ENCODE measurements at regions of chr4 and their contacts with region 1.

Region 1: DNA sequence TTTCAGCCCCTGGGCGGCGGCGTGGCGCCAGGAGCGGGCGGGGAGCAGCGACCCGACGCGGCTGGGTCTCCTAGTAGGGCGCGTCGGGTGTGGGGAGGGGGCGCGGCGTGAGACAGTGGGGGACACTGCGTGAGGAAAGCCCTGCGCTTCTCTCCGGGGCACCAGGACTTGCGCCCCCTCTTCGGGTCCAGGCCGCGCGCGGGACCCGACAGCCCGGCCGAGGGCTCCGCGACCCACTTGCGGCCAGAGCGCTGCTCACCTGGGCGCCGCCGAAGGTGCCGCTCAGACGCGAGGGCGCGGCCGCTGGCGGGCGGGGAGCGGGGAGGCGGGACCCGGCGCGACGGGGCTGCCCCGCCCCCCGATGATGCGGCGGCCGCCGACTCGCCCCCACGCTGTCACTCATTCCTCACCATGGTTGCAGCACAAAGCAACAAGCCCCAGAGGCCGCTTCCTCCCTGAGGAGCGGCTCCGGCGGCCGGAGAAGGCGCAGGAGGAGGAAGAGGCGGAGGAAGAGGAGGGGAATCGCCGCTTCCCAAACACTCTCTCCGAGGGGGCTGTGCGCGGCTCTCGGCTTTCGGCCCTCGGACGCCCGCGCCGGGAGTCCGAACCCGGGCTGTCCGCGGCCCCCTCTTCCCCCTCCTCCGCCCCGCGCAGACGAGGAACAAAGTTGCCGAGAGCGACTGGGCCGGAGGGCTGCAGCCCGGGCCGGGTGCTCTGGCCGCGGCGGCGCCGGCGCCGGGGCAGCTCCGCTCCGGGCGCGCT is at the start of gene RAPGEF2:
- DNase-seq: peak; percentile 93 to 94
- H3K4me3 ChIP-seq: peak within 1 kb of the TSS; percentile 94
- H3K4me3 Mint-ChIP-seq: peak within 1 kb of the TSS; percentile 99
- H3K27ac Mint-ChIP-seq: peak within 1 kb of the TSS; percentile 97
- H3K4me1 ChIP-seq: peaks cover 27% of the 10 kb centered on the region
- H3K4me1 Mint-ChIP-seq: peaks cover 35% of the 10 kb centered on the region
- H3K27me3 ChIP-seq: no peaks in the 10 kb centered on the region
- H3K27me3 Mint-ChIP-seq: no peaks in the 10 kb centered on the region
- CTCF ChIP-seq: peak in 1 of 2 experiments; percentile 37
- total RNA-seq, gene RAPGEF2: 65.6 and 67.6 TPM in 2 replicates

Region 2: DNA sequence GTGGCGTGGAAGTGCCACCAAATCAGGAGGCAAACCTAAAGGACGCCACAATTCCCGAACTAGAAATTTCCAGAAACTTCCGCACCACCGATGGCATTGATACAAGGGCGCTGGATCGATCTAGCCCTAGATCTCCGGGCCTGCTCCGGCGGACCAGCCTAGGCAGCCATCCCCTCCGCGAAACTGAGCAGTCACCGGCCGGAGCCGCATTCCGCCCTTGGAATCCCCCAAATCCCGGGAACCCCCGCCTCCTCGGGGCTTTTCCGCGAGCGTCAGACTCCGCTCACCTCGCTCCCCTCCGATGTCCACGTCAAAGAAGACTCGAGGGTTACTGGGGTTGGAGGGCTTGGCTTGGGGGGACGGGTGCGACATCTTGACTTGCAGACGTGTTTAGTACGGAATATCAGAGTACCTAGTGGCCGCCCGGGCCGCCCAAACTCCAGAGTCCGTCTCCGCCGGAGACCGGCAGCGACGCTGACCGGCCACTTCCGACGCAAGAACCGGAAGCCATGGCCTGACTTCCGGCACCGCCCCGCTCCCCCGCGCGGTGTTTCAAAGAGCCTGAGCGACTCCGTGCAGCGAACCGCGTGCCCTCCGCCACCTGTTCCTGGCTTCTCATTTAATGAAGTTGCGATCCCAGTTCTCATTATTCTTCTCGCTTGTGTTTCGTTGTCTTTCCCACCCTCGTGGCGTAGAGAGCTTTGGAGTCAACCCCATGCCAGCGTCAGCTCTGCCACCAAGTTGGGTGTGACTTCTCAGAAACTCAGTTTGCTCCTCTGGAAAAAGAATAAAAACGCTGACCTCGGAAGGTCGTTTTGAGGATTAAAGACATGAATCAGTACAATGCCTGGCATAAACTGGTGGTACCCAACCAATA is 379.6 kb before region 1 on chr4 and contains the start of gene PPID:
- CTCF ChIA-PET with region 1: no interaction called
- POLR2A ChIA-PET with region 1: no interaction called
- intact Hi-C with region 1: loop called (anchors 2 kb)
- DNase-seq: peak; percentile 85 to 88
- H3K4me3 ChIP-seq: peak within 1 kb of the TSS; percentile 68
- H3K4me3 Mint-ChIP-seq: peak within 1 kb of the TSS; percentile 90
- H3K27ac Mint-ChIP-seq: peak within 1 kb of the TSS; percentile 95
- H3K4me1 ChIP-seq: peaks cover 6% of the 10 kb centered on the region
- H3K4me1 Mint-ChIP-seq: peaks cover 9% of the 10 kb centered on the region
- H3K27me3 ChIP-seq: no peaks in the 10 kb centered on the region
- H3K27me3 Mint-ChIP-seq: no peaks in the 10 kb centered on the region
- CTCF ChIP-seq: no peak
- total RNA-seq, gene PPID: 50.9 and 57.2 TPM in 2 replicates

Region 3: GRCh38 chr4:158870626-158871334 is 232.0 kb before region 1 on chr4:
- CTCF ChIA-PET with region 1: no interaction called
- POLR2A ChIA-PET with region 1: no interaction called
- intact Hi-C with region 1: no loop called
- DNase-seq: no peak
- H3K4me3 ChIP-seq: no peak overlapping the region
- H3K4me3 Mint-ChIP-seq: no peak overlapping the region
- H3K27ac Mint-ChIP-seq: peak overlapping the region; percentile 46
- H3K4me1 ChIP-seq: peaks cover 11% of the 10 kb centered on the region
- H3K4me1 Mint-ChIP-seq: peaks cover 10% of the 10 kb centered on the region
- H3K27me3 ChIP-seq: no peaks in the 10 kb centered on the region
- H3K27me3 Mint-ChIP-seq: no peaks in the 10 kb centered on the region
- CTCF ChIP-seq: no peak

Region 4: GRCh38 chr4:159071178-159071991 is 31.4 kb before region 1 on chr4:
- CTCF ChIA-PET with region 1: no interaction called
- POLR2A ChIA-PET with region 1: no interaction called
- intact Hi-C with region 1: loop called (anchors 2 kb)
- DNase-seq: peak; percentile 37 to 38
- H3K4me3 ChIP-seq: no peak overlapping the region
- H3K4me3 Mint-ChIP-seq: no peak overlapping the region
- H3K27ac Mint-ChIP-seq: peak overlapping the region; percentile 83
- H3K4me1 ChIP-seq: peaks cover 21% of the 10 kb centered on the region
- H3K4me1 Mint-ChIP-seq: peaks cover 12% of the 10 kb centered on the region
- H3K27me3 ChIP-seq: no peaks in the 10 kb centered on the region
- H3K27me3 Mint-ChIP-seq: no peaks in the 10 kb centered on the region
- CTCF ChIP-seq: no peak

Region 5: DNA sequence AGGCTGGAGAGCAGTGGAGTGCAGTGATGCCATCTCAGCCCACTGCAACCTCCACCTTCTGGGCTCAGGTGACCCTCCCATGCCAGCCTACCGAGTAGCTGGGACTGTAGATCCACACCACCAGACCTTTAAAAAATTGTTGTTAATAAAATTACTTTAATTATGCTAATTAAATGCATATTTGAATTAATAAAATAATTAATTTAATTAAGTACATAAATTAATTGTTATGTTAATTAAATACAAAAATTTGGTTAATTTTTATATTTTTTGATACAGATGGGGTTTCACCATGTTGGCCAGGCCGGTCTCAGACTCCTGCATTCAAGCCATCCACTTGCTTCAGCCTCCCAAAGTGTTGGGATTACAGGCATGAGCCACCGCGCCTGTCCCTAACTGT is 12.5 kb before region 1 on chr4:
- CTCF ChIA-PET with region 1: no interaction called
- POLR2A ChIA-PET with region 1: no interaction called
- intact Hi-C with region 1: no loop called
- DNase-seq: no peak
- H3K4me3 ChIP-seq: no peak overlapping the region
- H3K4me3 Mint-ChIP-seq: no peak overlapping the region
- H3K27ac Mint-ChIP-seq: no peak overlapping the region
- H3K4me1 ChIP-seq: peaks cover 4% of the 10 kb centered on the region
- H3K4me1 Mint-ChIP-seq: no peaks in the 10 kb centered on the region
- H3K27me3 ChIP-seq: no peaks in the 10 kb centered on the region
- H3K27me3 Mint-ChIP-seq: no peaks in the 10 kb centered on the region
- CTCF ChIP-seq: no peak

Region 6: GRCh38 chr4:159129814-159130550 is 27.2 kb after region 1 on chr4:
- CTCF ChIA-PET with region 1: interaction called, 5 read pairs
- POLR2A ChIA-PET with region 1: no interaction called
- intact Hi-C with region 1: loop called (anchors 1 kb)
- DNase-seq: peak; percentile 71 to 77
- H3K4me3 ChIP-seq: no peak overlapping the region
- H3K4me3 Mint-ChIP-seq: peak overlapping the region; percentile 61
- H3K27ac Mint-ChIP-seq: peak overlapping the region; percentile 79
- H3K4me1 ChIP-seq: peaks cover 66% of the 10 kb centered on the region
- H3K4me1 Mint-ChIP-seq: peaks cover 27% of the 10 kb centered on the region
- H3K27me3 ChIP-seq: no peaks in the 10 kb centered on the region
- H3K27me3 Mint-ChIP-seq: no peaks in the 10 kb centered on the region
- CTCF ChIP-seq: no peak

Measured in Caco-2 (cell line).